Activated T-helper 1 cell treated with anti-CD3 and anti-CD28 coated beads, Interleukin-12 subunit alpha, Interleukin-12 subunit beta, Interleukin-2, Interleukin-4 antibody, amounts not matched to agents 30 ng/mL and 10 ng/mL and 1 ng/mL, durations not matched to agents 14 hours and 24 hours and 36 hours (primary cell): ENCODE measurements at regions of chr12 and their contacts with region 1.

Region 1: DNA sequence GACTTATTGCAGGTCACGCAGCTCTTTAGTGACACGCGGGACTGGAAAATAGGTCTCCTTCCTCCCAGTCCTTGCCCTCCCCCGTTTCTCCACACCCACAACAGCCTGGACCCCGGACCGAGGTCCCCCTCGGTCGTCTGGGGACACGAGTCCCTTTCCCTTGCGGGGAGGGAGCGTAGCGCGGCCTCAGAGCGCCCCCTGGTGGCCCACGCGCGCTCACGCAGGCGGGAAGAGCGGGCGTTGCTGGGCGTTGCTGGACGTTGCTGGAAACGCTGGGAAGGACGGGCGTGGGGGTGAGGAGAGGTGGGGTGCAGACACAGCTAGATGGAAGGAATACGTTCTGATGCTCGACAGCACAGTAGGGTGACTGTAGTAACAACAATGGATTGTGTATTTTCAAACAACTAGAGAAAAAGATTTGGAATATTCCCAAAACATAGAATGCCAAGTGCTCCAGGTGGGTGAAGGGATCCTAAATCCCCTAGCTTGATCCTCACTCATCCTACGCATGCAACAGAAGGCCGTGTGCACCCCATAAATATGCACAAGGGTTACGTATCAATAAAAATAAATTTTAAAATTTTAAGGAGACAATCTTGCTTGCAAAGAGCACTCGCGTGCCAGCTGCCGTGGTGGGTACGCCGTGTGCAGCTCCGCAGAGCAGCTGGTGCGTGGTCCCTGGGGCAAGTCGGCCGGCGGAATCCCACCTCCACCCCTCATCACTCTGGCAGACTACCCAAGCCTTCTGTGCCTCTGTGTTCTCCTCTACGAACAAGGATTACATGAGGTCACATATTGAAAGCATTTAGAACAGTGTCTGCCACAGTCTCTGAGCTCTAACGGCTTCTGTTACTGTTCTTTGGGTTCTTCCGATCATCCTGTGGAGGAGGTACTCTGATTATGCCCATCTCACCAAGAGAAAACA is 87.4 kb downstream of the B4GALNT3 start:
- DNase-seq: peak; percentile 68
- H3K4me3 Mint-ChIP-seq: peak overlapping the region; percentile 22
- H3K27ac Mint-ChIP-seq: no peak overlapping the region
- H3K4me1 Mint-ChIP-seq: peaks cover 30% of the 10 kb centered on the region
- H3K27me3 Mint-ChIP-seq: peaks cover 13% of the 10 kb centered on the region

Region 2: GRCh38 chr12:414859-415258 is 132.3 kb before region 1 on chr12:
- intact Hi-C with region 1: no loop called
- DNase-seq: no peak
- H3K4me3 Mint-ChIP-seq: no peak overlapping the region
- H3K27ac Mint-ChIP-seq: no peak overlapping the region
- H3K4me1 Mint-ChIP-seq: no peaks in the 10 kb centered on the region
- H3K27me3 Mint-ChIP-seq: no peaks in the 10 kb centered on the region

Region 3: DNA sequence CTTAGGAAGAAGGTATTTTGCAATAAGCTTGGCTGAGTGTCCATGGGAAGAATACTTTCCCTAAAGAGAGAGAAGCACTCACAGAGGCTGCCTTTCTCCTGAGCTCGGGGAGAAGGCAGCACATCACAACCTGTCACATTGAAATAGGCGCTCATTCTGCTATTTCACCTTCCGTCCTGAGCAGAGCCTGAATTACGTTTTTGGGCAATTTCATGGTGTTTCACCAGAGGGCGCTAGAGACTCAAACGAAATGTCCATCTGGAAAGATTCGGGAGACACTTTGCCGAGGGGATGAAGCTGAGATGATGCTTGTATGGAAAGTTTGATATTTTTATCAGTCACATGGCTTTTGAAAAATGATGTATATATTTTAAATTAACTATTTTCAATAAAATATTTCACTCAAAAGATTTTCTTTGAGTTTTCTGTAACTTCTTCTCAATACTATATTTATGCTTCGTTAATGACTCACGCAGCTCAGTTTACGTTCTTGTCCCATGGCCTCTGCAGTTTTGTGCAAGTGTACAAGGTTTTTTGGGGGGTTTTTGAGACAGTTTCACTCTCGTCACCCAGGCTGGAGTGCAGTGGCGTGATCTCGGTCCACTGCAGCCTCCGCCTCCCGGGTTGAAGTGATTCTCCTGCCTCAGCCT is 104.8 kb before region 1 on chr12:
- intact Hi-C with region 1: loop called (anchors 1 kb)
- DNase-seq: peak; percentile 24
- H3K4me3 Mint-ChIP-seq: no peak overlapping the region
- H3K27ac Mint-ChIP-seq: no peak overlapping the region
- H3K4me1 Mint-ChIP-seq: no peaks in the 10 kb centered on the region
- H3K27me3 Mint-ChIP-seq: no peaks in the 10 kb centered on the region

Region 4: DNA sequence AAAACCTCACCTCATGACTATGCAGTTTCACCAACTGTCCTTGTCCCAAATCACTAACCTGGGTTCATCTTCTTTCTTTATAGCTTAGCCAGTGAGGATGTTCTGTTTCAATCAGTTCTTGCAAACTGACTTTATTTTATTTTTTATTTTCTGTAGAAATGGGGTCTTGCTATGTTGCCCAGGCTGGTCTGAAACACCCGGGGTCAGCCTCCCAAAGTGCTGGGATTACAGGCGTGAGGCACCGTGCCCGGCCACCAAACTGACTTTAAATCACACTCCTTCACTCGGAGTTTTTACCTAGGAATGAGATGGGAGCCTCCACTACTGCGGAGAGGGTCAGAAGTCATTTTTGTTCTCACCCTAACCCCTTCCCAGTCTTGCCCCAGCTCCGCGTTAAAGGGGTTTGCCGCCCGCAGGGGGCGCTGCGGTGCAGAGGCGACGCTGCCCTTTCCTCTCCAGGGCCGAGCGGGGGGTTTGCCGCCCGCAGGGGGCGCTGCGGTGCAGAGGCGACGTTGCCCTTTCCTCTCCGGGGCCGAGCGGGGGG is 94.4 kb before region 1 on chr12:
- intact Hi-C with region 1: loop called (anchors 1 kb)
- DNase-seq: peak; percentile 74
- H3K4me3 Mint-ChIP-seq: no peak overlapping the region
- H3K27ac Mint-ChIP-seq: no peak overlapping the region
- H3K4me1 Mint-ChIP-seq: peaks cover 4% of the 10 kb centered on the region
- H3K27me3 Mint-ChIP-seq: peaks cover 22% of the 10 kb centered on the region

Region 5: DNA sequence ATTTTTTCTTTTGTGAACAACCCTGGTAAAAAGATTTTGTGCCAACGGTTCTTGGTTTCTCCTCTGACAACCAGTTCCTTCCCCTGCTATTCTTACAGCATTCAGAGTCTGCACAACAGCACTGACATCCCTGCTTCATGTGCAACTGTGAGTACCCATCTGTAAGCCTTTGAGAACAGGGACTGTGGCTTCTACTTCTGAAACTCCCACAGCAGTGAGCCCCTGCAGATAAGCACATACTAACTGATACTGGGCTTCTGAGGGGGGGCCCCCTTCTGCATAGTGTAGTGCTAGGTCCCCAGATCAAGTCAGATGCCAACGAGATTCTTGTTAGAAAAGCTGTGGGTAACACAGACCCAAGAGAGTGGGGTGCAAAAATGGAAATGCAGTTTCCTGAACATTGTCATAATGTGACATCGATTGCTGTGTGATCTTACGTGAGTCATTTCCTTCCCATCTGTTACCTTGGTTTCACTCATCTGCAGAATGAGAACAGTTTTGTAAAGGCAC is 127.1 kb after region 1 on chr12:
- intact Hi-C with region 1: no loop called
- DNase-seq: peak; percentile 73
- H3K4me3 Mint-ChIP-seq: peak overlapping the region; percentile 72
- H3K27ac Mint-ChIP-seq: peak overlapping the region; percentile 89
- H3K4me1 Mint-ChIP-seq: peaks cover 74% of the 10 kb centered on the region
- H3K27me3 Mint-ChIP-seq: no peaks in the 10 kb centered on the region